ENCODE measurements at regions of chr13 and their contacts with region 1.

Region 1: GRCh38 chr13:29693275-29693961 is 97.9 kb upstream of the SLC7A1 start:
- DNase-seq: no peak
- CTCF ChIP-seq: no peak

Region 2: GRCh38 chr13:29707876-29708543 is 14.6 kb after region 1 on chr13:
- CTCF ChIA-PET with region 1: interaction called, 11 read pairs
- POLR2A ChIA-PET with region 1: no interaction called
- DNase-seq: peak; percentile 55
- CTCF ChIP-seq: peak; percentile 57

Measured in GM10248 (cell line).